CD8-positive, alpha-beta T cell (primary cell): ENCODE measurements at regions of chr10 and their contacts with region 1.

Region 1: DNA sequence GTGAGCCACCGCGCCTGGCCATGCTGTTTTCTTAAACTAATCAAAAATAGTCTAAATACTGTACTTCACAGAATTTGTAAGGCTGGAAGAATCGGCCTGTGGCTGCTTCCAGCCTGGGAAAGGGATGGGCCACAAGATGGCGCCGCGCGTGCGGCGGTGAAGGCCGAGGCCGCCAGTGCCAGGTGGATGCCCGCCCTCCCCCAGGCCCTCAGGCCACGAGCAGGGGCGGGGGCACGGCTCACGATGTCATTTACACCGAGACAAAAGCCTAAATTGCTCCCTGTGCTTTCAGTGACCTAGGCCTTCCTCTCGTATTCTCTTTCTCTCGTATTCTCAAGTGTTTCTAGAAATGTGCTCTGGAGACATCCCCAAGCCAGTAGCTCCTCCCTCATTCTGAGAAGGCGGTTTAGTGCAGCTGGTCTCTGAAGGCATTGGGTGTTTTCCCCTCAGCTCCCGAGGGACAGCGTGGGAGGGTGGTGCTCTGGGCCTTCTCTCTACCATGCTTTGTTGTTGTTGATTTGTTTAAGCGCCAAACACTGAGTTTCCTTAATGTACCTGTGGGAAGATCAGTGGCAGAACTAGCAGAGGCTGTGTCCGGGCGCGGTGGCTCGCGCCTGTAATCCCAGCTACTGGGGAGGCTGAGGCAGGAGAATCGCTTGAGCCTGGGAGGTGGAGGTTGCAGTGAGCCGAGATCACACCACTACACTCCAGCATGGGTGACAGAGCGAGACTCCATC is 68.4 kb downstream of the CDC123 start:
- DNase-seq: peak; percentile 30 to 83 (median 67)
- ATAC-seq: peak; percentile 76
- H3K4me3 ChIP-seq: peak overlapping the region; percentile 35 to 36
- H3K4me3 Mint-ChIP-seq: peak overlapping the region; percentile 72
- H3K27ac ChIP-seq: no peak overlapping the region
- H3K27ac Mint-ChIP-seq: peak overlapping the region; percentile 64
- H3K4me1 ChIP-seq: no peaks in the 10 kb centered on the region
- H3K4me1 Mint-ChIP-seq: peaks cover 14% of the 10 kb centered on the region
- H3K27me3 ChIP-seq: no peaks in the 10 kb centered on the region
- H3K27me3 Mint-ChIP-seq: no peaks in the 10 kb centered on the region
- CTCF ChIP-seq: peak; percentile 70

Region 2: DNA sequence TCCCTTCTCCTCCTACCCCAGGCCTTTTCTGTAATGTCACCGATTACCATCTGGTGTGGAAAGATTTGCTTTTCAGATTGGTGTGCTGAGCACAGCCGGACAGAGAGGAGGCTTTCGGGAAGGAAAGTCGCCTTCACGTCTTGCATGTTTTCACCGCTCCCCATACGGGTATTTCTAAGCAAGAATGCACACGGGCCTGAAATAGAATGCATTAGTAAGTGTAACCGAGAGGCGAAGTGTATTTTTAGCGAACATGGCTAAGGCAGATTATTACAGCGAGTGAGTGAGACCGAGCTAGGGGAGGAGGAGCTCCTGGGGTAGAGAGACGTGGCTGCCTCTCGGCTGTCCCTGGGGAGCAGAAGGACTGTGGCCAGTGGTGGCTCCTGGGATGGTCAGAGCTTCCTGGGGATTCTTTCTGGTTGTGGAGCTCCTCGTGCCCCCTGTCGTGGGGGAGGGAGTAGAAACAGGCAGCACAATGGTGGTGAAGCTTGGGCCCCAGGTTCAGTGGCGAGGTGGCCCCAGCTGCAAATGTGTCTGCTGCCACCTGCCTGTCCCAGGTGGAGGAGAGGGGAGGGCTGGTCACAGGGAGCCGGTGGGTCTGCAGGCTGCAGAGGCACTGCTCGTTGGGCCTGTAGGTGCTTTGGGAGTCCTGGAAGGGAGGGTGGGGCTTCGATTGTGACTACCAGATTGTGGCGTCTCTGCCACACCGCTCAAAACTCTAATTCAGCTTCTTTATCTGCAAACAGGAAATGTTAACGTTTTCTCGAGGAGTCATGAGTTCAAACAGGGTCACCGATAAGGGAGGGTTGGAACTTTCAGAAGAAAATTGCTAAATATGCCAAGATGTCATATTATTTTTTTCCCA is 220.8 kb after region 1 on chr10:
- CTCF ChIA-PET with region 1: interaction called, 6 read pairs
- POLR2A ChIA-PET with region 1: no interaction called
- intact Hi-C with region 1: loop called (anchors 1 kb)
- DNase-seq: peak in 6 of 9 experiments; percentile 26 to 62 (median 44)
- ATAC-seq: peak; percentile 66
- H3K4me3 ChIP-seq: no peak overlapping the region
- H3K4me3 Mint-ChIP-seq: peak overlapping the region; percentile 60
- H3K27ac ChIP-seq: no peak overlapping the region
- H3K27ac Mint-ChIP-seq: peak overlapping the region; percentile 80
- H3K4me1 ChIP-seq: peaks cover 7% of the 10 kb centered on the region
- H3K4me1 Mint-ChIP-seq: peaks cover 37% of the 10 kb centered on the region
- H3K27me3 ChIP-seq: no peaks in the 10 kb centered on the region
- H3K27me3 Mint-ChIP-seq: no peaks in the 10 kb centered on the region
- CTCF ChIP-seq: no peak

Region 3: DNA sequence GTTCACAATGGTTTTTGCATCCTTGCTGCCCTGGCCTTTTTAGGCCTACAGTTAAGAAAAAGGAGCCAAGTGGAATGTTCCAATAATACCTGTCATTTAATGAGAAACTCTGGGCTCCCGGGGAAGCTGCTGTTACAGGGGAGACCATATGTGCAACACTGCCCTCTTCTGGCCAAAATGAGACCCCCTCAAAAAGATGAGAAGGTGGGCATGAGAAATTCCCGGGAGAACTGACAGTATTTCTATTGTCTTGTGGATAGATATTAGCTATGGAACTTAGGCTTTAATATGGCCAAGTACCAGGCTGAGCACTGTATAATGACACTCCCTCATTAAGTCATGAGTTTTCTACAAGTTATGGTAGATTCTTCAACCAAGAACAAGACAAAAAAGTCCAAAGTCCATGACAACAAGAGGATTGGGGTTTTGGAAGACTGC is 637.8 kb after region 1 on chr10:
- CTCF ChIA-PET with region 1: interaction called, 7 read pairs
- POLR2A ChIA-PET with region 1: no interaction called
- intact Hi-C with region 1: loop called in 1 of 2 experiments (anchors 5 kb)
- DNase-seq: peak in 8 of 9 experiments; percentile 12 to 68 (median 48)
- ATAC-seq: no peak
- H3K4me3 ChIP-seq: no peak overlapping the region
- H3K4me3 Mint-ChIP-seq: no peak overlapping the region
- H3K27ac ChIP-seq: no peak overlapping the region
- H3K27ac Mint-ChIP-seq: no peak overlapping the region
- H3K4me1 ChIP-seq: no peaks in the 10 kb centered on the region
- H3K4me1 Mint-ChIP-seq: no peaks in the 10 kb centered on the region
- H3K27me3 ChIP-seq: no peaks in the 10 kb centered on the region
- H3K27me3 Mint-ChIP-seq: peaks cover 10% of the 10 kb centered on the region
- CTCF ChIP-seq: peak; percentile 67